Activated CD4-positive, alpha-beta T cell treated with anti-CD3 and anti-CD28 coated beads, Interleukin-2, amount 10 ng/mL, durations not matched to agents 24 days and 14 days (primary cell): ENCODE measurements at regions of chr7 and their contacts with region 1.

Region 1: DNA sequence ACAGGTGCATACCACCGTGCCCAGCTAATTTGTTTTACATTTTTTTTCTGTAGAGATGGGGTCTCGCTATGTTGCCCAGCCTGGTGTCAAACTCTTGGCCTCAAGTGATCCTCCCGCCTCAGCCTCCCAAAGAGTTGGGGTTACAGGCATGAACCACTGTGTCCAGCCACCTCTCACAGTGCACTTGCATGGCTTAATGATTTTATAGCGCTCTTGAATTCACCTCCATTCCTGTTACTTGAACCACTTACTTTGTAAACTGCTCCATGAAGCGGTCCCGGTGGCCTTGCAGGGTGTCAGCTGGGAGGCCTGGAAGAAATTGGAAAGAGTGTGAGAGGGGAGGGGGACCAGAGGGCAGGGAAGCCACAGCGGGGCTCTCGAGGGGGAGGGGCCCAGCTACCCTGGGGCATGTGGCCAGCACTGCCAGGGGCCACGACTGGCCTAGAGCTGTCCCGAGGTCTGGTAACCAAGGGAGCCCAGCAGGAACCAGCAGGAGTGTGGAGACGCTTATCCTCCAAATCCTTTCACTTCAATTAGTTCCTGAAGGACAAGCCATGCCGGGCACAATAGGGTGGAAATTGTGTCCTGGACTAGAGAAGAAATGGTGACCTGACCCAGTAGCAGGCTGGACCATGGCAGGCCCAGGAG is 76.0 kb downstream of the SPDYE5 start:
- DNase-seq: no peak
- H3K4me3 Mint-ChIP-seq: no peak overlapping the region
- H3K27ac Mint-ChIP-seq: no peak overlapping the region
- H3K4me1 Mint-ChIP-seq: no peaks in the 10 kb centered on the region
- H3K27me3 Mint-ChIP-seq: no peaks in the 10 kb centered on the region

Region 2: DNA sequence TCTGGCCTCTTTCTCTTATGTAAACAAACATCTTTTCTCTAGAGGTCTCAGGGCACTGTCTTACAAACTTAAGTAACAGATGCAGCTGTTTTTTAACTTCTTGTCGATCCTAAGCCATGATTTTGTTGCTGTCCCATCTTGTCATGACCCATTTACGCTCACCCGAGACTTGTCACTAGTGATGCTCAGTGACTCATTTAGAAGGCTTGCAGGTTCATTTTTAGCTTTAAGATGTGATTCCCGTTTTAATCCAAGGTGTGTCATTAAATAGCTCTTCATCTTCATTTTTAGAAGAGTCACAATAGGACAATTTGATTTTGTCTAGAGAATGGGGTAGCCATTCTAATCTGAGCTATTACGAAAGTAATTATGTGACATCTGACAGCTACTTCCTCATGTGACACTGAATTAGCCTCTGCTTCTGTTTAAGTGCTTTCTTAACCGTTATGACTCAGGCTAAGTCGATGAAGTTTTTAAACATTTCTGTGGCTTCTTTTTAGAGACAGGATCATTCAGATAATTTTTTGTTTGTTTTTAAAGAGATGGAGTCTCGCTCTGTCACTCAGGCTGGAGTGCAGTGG is 33.3 kb before region 1 on chr7:
- intact Hi-C with region 1: no loop called
- DNase-seq: no peak
- H3K4me3 Mint-ChIP-seq: no peak overlapping the region
- H3K27ac Mint-ChIP-seq: no peak overlapping the region
- H3K4me1 Mint-ChIP-seq: peaks cover 7% of the 10 kb centered on the region
- H3K27me3 Mint-ChIP-seq: no peaks in the 10 kb centered on the region

Region 3: GRCh38 chr7:75595766-75596165 is 27.7 kb after region 1 on chr7:
- intact Hi-C with region 1: loop called (anchors 2 kb)
- DNase-seq: no peak
- H3K4me3 Mint-ChIP-seq: no peak overlapping the region
- H3K27ac Mint-ChIP-seq: no peak overlapping the region
- H3K4me1 Mint-ChIP-seq: peaks cover 15% of the 10 kb centered on the region
- H3K27me3 Mint-ChIP-seq: no peaks in the 10 kb centered on the region

Region 4: GRCh38 chr7:75727881-75728592 is 160.0 kb after region 1 on chr7:
- intact Hi-C with region 1: no loop called
- DNase-seq: peak; percentile 73
- H3K4me3 Mint-ChIP-seq: no peak overlapping the region
- H3K27ac Mint-ChIP-seq: peak overlapping the region; percentile 29
- H3K4me1 Mint-ChIP-seq: peaks cover 8% of the 10 kb centered on the region
- H3K27me3 Mint-ChIP-seq: no peaks in the 10 kb centered on the region

Region 5: GRCh38 chr7:76011442-76011861 is 443.4 kb after region 1 on chr7:
- intact Hi-C with region 1: no loop called
- DNase-seq: no peak
- H3K4me3 Mint-ChIP-seq: no peak overlapping the region
- H3K27ac Mint-ChIP-seq: no peak overlapping the region
- H3K4me1 Mint-ChIP-seq: peaks cover 35% of the 10 kb centered on the region
- H3K27me3 Mint-ChIP-seq: no peaks in the 10 kb centered on the region